ENCODE measurements at regions of chr1 and their contacts with region 1.

Region 1: DNA sequence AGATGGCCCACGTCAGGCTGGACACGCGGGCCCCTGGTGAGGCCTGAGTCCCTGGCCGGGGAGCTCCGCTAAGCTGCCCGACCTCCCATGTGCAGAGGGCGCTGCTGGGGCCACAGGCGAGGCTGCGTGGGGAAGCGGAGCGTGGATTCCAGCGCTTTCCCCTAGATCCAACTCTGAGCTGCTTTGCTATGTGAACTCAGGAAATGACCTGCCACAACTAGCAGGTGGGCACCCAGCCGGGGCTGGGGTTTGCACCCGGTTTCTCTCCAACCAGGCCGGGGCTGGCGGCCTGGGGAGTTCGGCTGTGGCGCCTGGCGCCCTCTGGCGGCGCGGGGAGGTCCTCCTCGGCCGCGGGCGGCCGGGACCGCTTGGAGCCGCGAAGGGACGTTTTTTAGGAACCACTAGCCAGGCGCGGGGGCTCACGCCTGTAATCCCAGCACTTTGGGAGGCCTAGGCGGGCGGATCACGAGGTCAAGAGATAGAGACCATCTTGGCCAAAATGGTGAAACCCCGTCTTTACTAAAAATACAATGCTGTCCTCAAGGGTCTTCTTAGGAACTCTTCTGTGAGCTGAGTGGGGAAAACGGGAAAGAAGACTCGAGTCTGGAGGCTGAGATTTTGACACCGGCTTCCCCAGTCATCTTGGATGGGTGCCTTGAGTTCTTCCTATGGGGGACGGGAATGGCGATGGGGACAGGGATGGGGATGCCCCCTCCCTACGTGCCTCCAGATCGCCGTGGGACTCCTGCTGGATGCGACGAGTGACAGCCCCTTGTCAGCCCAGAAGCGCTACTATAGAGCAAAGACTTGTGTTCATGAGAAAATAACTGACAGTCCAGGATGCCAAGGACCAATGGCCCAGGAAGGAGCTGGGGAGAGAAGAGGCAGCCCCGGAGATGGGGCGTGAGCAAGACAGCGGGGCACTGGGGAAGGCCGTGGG is 12.6 kb downstream of the PYCR2 start:
- DNase-seq: peak; percentile 62
- H3K4me3 Mint-ChIP-seq: no peak overlapping the region
- H3K27ac Mint-ChIP-seq: no peak overlapping the region
- H3K4me1 Mint-ChIP-seq: peaks cover 5% of the 10 kb centered on the region
- H3K27me3 Mint-ChIP-seq: peaks cover 6% of the 10 kb centered on the region

Region 2: GRCh38 chr1:225866061-225866837 is 45.2 kb before region 1 on chr1:
- intact Hi-C with region 1: loop called (anchors 5 kb)
- DNase-seq: peak; percentile 58
- H3K4me3 Mint-ChIP-seq: peak overlapping the region; percentile 55
- H3K27ac Mint-ChIP-seq: no peak overlapping the region
- H3K4me1 Mint-ChIP-seq: peaks cover 26% of the 10 kb centered on the region
- H3K27me3 Mint-ChIP-seq: no peaks in the 10 kb centered on the region